GM12878 (cell line): ENCODE measurements at regions of chr13 and their contacts with region 1.

Region 1: GRCh38 chr13:50081679-50082425 is 66.6 kb downstream of the KCNRG start:
- DNase-seq: peak; percentile 100
- ATAC-seq: peak; percentile 79
- H3K4me3 ChIP-seq: peak overlapping the region; percentile 92
- H3K27ac ChIP-seq: peak overlapping the region; percentile 82
- H3K4me1 ChIP-seq: peaks cover 4% of the 10 kb centered on the region; the same call in 1 of the 2 replicates
- H3K27me3 ChIP-seq: no peaks in the 10 kb centered on the region
- CTCF ChIP-seq: 0 out of 6 replicates have a peak, but pooled peaks of 2 of the 3 experiments have one; percentile 0 to 9
- EP300 ChIP-seq: 0 out of 4 replicates have a peak, but pooled peaks of 1 of the 2 experiments have one; percentile 9
- POLR2A ChIP-seq: peak; percentile 69
- RAD21 ChIP-seq: no peak

Region 2: GRCh38 chr13:49996951-49997895 is 84.6 kb before region 1 on chr13 and contains the start of gene TRIM13:
- CTCF ChIA-PET with region 1: interaction called, 159 read pairs
- POLR2A ChIA-PET with region 1: interaction called, 80 read pairs
- RAD21 ChIA-PET with region 1: interaction called, 175 read pairs
- SMC1A ChIA-PET with region 1: interaction called, 38 read pairs
- in situ Hi-C with region 1: no loop called
- intact Hi-C with region 1: loop called (anchors 1 kb)
- DNase-seq: peak; percentile 48
- ATAC-seq: peak; percentile 84
- H3K4me3 ChIP-seq: peak within 1 kb of the TSS; percentile 92
- H3K27ac ChIP-seq: peak within 1 kb of the TSS; percentile 96
- H3K4me1 ChIP-seq: peaks cover 12% of the 10 kb centered on the region
- H3K27me3 ChIP-seq: no peaks in the 10 kb centered on the region
- CTCF ChIP-seq: peak; percentile 80 to 87 (median 81)
- EP300 ChIP-seq: 0 out of 4 replicates have a peak, but pooled peaks of 1 of the 2 experiments have one; percentile 26
- POLR2A ChIP-seq: peak; percentile 91
- RAD21 ChIP-seq: peak; percentile 68
- polyA plus RNA-seq, gene TRIM13: 25.7 to 33.8 TPM

Region 3: GRCh38 chr13:50069261-50069660 is 12.6 kb before region 1 on chr13:
- CTCF ChIA-PET with region 1: interaction called, 11 read pairs
- POLR2A ChIA-PET with region 1: interaction called, 14 read pairs
- RAD21 ChIA-PET with region 1: interaction called, 5 read pairs
- SMC1A ChIA-PET with region 1: interaction called, 59 read pairs
- in situ Hi-C with region 1: no loop called
- intact Hi-C with region 1: no loop called
- DNase-seq: no peak
- ATAC-seq: no peak
- H3K4me3 ChIP-seq: no peak overlapping the region
- H3K27ac ChIP-seq: no peak overlapping the region
- H3K4me1 ChIP-seq: peaks cover 8% of the 10 kb centered on the region; the same call in 1 of the 2 replicates
- H3K27me3 ChIP-seq: no peaks in the 10 kb centered on the region
- CTCF ChIP-seq: no peak
- EP300 ChIP-seq: no peak
- POLR2A ChIP-seq: no peak
- RAD21 ChIP-seq: no peak

Region 4: GRCh38 chr13:50365408-50366391 is 283.8 kb after region 1 on chr13:
- CTCF ChIA-PET with region 1: no interaction called
- POLR2A ChIA-PET with region 1: no interaction called
- RAD21 ChIA-PET with region 1: no interaction called
- SMC1A ChIA-PET with region 1: no interaction called
- in situ Hi-C with region 1: no loop called
- intact Hi-C with region 1: loop called (anchors 5 kb)
- DNase-seq: peak; percentile 67
- ATAC-seq: peak; percentile 81
- H3K4me3 ChIP-seq: no peak overlapping the region
- H3K27ac ChIP-seq: no peak overlapping the region
- H3K4me1 ChIP-seq: peaks cover 24% of the 10 kb centered on the region
- H3K27me3 ChIP-seq: peaks cover 0 to 4% of the 10 kb centered on the region in 2 experiments; a peak in 1 of 4 replicates
- CTCF ChIP-seq: no peak
- EP300 ChIP-seq: peak in 1 of 2 experiments; percentile 42; a peak in 1 of 4 replicates
- POLR2A ChIP-seq: no peak
- RAD21 ChIP-seq: no peak

Region 5: GRCh38 chr13:50594276-50595051 is 512.6 kb after region 1 on chr13:
- CTCF ChIA-PET with region 1: interaction called, 5 read pairs
- POLR2A ChIA-PET with region 1: no interaction called
- RAD21 ChIA-PET with region 1: no interaction called
- SMC1A ChIA-PET with region 1: no interaction called
- in situ Hi-C with region 1: no loop called
- intact Hi-C with region 1: loop called (anchors 5 kb)
- DNase-seq: peak; percentile 79
- ATAC-seq: peak; percentile 91
- H3K4me3 ChIP-seq: peak overlapping the region; percentile 53; the same call in 1 of the 2 replicates
- H3K27ac ChIP-seq: peak overlapping the region; percentile 62
- H3K4me1 ChIP-seq: peaks cover 45% of the 10 kb centered on the region
- H3K27me3 ChIP-seq: no peaks in the 10 kb centered on the region
- CTCF ChIP-seq: 0 out of 6 replicates have a peak, but pooled peaks of 1 of the 3 experiments have one; percentile 17
- EP300 ChIP-seq: peak; percentile 71 to 80
- POLR2A ChIP-seq: no peak
- RAD21 ChIP-seq: peak; percentile 47